Activated CD4-positive, alpha-beta T cell treated with anti-CD3 and anti-CD28 coated beads, Interleukin-2, amount 10 ng/mL, durations not matched to agents 24 days and 14 days (primary cell): ENCODE measurements at regions of chr7 and their contacts with region 1.

Region 1: DNA sequence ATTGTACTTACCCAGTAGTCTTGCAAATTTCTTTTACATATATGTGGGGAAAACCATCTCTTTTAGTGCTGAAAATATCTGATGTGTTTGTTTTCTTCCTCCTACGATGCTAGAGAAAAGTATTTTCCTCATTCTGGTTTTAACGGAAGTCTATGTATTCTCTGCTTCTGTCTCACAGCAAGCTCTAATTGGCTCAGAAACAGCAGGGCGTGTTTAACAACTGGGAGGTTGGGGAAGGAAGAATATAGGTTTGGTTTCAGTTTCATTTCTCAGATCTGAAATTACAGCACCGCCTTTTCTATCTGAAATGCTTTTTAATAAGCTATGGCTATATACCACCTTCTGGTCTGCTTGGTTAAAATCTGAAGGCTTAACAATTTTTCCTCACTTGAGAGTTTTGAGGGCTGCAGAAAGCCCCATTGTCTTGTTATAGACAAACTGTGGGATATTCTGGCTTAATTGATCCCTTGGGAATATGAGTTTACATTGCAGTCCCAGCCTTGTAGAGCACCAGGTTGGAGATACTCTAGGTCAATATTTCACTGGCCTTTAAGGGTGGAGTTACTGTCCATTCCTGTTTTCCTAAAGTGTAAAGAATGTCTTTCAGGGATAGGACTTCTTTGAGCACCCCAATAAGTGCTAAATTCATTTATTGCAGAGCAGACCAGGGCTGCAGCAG is at the start of gene SAMD9:
- DNase-seq: peak; percentile 90
- H3K4me3 Mint-ChIP-seq: peak within 1 kb of the TSS; percentile 90
- H3K27ac Mint-ChIP-seq: peak within 1 kb of the TSS; percentile 90
- H3K4me1 Mint-ChIP-seq: peaks cover 54% of the 10 kb centered on the region
- H3K27me3 Mint-ChIP-seq: no peaks in the 10 kb centered on the region
- total RNA-seq, gene SAMD9: 8.6 and 9.4 TPM in 2 replicates

Region 2: GRCh38 chr7:93147363-93147762 is 29.4 kb after region 1 on chr7:
- intact Hi-C with region 1: loop called (anchors 1 kb)
- DNase-seq: peak; percentile 84
- H3K4me3 Mint-ChIP-seq: peak overlapping the region; percentile 95
- H3K27ac Mint-ChIP-seq: peak overlapping the region; percentile 74
- H3K4me1 Mint-ChIP-seq: peaks cover 40% of the 10 kb centered on the region
- H3K27me3 Mint-ChIP-seq: no peaks in the 10 kb centered on the region

Region 3: DNA sequence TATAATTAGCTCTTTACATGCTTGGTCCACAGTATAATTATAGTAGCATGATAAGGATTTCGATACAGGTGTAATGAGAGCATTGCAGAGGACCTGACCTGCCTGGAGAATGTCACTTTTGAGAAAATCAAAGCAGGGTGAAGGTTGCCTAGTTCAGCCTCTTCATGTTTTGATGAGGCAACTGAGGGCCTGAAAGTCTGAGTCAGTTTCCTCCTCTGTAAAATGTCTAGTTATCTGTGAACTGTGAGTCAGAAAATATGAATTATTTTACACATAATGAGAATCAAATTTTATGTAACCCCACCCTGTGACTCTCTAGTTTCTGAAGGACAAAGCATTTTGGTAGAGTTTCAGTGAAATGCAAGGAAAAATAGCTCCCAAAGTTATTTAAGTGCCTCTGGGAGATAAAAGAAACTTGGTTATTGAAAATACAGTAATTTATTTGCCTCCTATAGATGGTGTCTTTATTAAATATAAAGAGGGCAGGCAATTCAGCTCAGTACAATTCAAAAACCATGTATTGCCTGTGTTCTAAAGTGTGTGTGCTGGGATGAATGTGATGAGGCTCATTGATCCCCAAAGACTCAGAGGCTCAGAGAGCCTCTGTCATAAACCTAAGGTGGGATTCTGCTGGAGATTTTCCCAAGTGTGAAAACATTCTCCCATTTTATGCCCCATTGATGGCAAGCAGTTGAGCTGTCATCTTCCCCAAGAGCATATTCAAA is 67.5 kb after region 1 on chr7:
- intact Hi-C with region 1: loop called (anchors 2 kb)
- DNase-seq: no peak
- H3K4me3 Mint-ChIP-seq: no peak overlapping the region
- H3K27ac Mint-ChIP-seq: no peak overlapping the region
- H3K4me1 Mint-ChIP-seq: no peaks in the 10 kb centered on the region
- H3K27me3 Mint-ChIP-seq: peaks cover 47% of the 10 kb centered on the region